CD4-positive, alpha-beta memory T cell (primary cell): ENCODE measurements at regions of chr19 and their contacts with region 1.

Region 1: GRCh38 chr19:19361075-19361594 is 40.5 kb downstream of the MAU2 start:
- DNase-seq: peak; percentile 57 to 77 (median 65)
- H3K4me3 ChIP-seq: peak overlapping the region in 1 of 2 donors; percentile 24
- H3K4me3 Mint-ChIP-seq: peak overlapping the region in 6 of 8 donors; percentile 34 to 66 (median 52)
- H3K27ac ChIP-seq: no peak overlapping the region
- H3K27ac Mint-ChIP-seq: peak overlapping the region; percentile 25 to 88 (median 82)
- H3K4me1 ChIP-seq: peaks cover 35% of the 10 kb centered on the region
- H3K4me1 Mint-ChIP-seq: peaks cover 24 to 47% (median 35%) of the 10 kb centered on the region in 4 donors
- H3K27me3 ChIP-seq: no peaks in the 10 kb centered on the region
- H3K27me3 Mint-ChIP-seq: no peaks in the 10 kb centered on the region

Region 2: GRCh38 chr19:18951665-18952281 is 409.4 kb before region 1 on chr19:
- CTCF ChIA-PET with region 1: no interaction called
- POLR2A ChIA-PET with region 1: no interaction called
- intact Hi-C with region 1: no loop called
- DNase-seq: no peak
- H3K4me3 ChIP-seq: no peak overlapping the region
- H3K4me3 Mint-ChIP-seq: no peak overlapping the region
- H3K27ac ChIP-seq: no peak overlapping the region
- H3K27ac Mint-ChIP-seq: no peak overlapping the region
- H3K4me1 ChIP-seq: no peaks in the 10 kb centered on the region
- H3K4me1 Mint-ChIP-seq: peaks cover 0 to 8% (median under 1%) of the 10 kb centered on the region in 4 donors
- H3K27me3 ChIP-seq: no peaks in the 10 kb centered on the region
- H3K27me3 Mint-ChIP-seq: peaks cover 0 to 6% of the 10 kb centered on the region in 2 donors

Region 3: GRCh38 chr19:19145684-19146608 is 215.2 kb before region 1 on chr19:
- CTCF ChIA-PET with region 1: interaction called, 3 read pairs
- POLR2A ChIA-PET with region 1: no interaction called
- intact Hi-C with region 1: loop called (anchors 5 kb)
- DNase-seq: peak; percentile 75 to 85 (median 79)
- H3K4me3 ChIP-seq: no peak overlapping the region
- H3K4me3 Mint-ChIP-seq: no peak overlapping the region
- H3K27ac ChIP-seq: no peak overlapping the region
- H3K27ac Mint-ChIP-seq: no peak overlapping the region
- H3K4me1 ChIP-seq: no peaks in the 10 kb centered on the region
- H3K4me1 Mint-ChIP-seq: no peaks in the 10 kb centered on the region
- H3K27me3 ChIP-seq: no peaks in the 10 kb centered on the region
- H3K27me3 Mint-ChIP-seq: no peaks in the 10 kb centered on the region

Region 4: GRCh38 chr19:19372656-19373416 is 11.7 kb after region 1 on chr19:
- CTCF ChIA-PET with region 1: interaction called, 30 read pairs
- POLR2A ChIA-PET with region 1: interaction called, 26 read pairs
- intact Hi-C with region 1: no loop called
- DNase-seq: peak; percentile 40 to 58 (median 52)
- H3K4me3 ChIP-seq: no peak overlapping the region
- H3K4me3 Mint-ChIP-seq: peak overlapping the region in 7 of 8 donors; percentile 50 to 73 (median 54)
- H3K27ac ChIP-seq: peak overlapping the region; percentile 63
- H3K27ac Mint-ChIP-seq: peak overlapping the region; percentile 79 to 95 (median 92)
- H3K4me1 ChIP-seq: peaks cover 18% of the 10 kb centered on the region
- H3K4me1 Mint-ChIP-seq: peaks cover 6 to 14% (median 9%) of the 10 kb centered on the region in 4 donors
- H3K27me3 ChIP-seq: no peaks in the 10 kb centered on the region
- H3K27me3 Mint-ChIP-seq: no peaks in the 10 kb centered on the region

Region 5: DNA sequence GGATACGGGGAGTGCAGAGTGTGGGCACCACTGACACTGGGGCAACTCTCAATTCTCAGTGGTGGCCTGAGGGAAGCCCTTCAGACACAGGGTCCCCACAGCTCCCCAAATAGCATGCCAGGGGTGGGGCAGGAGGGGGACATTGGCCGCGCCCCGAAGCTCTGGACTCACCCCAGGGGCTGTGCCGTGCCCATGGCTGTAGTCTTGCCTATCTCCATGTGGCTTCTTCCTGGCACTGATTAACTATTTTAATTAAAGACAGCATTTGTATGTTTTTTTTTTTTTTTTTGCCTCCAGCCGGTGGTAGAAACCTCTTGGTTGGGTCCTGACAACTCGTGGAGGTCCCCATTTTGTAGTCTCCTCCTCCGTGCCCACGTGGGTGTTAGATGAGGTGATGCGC is 67.6 kb after region 1 on chr19:
- CTCF ChIA-PET with region 1: no interaction called
- POLR2A ChIA-PET with region 1: no interaction called
- intact Hi-C with region 1: no loop called
- DNase-seq: no peak
- H3K4me3 ChIP-seq: no peak overlapping the region
- H3K4me3 Mint-ChIP-seq: no peak overlapping the region
- H3K27ac ChIP-seq: no peak overlapping the region
- H3K27ac Mint-ChIP-seq: peak overlapping the region in 3 of 7 donors; percentile 42 to 68 (median 67)
- H3K4me1 ChIP-seq: peaks cover 82% of the 10 kb centered on the region
- H3K4me1 Mint-ChIP-seq: peaks cover 48 to 100% (median 74%) of the 10 kb centered on the region in 4 donors
- H3K27me3 ChIP-seq: no peaks in the 10 kb centered on the region
- H3K27me3 Mint-ChIP-seq: no peaks in the 10 kb centered on the region

Region 6: DNA sequence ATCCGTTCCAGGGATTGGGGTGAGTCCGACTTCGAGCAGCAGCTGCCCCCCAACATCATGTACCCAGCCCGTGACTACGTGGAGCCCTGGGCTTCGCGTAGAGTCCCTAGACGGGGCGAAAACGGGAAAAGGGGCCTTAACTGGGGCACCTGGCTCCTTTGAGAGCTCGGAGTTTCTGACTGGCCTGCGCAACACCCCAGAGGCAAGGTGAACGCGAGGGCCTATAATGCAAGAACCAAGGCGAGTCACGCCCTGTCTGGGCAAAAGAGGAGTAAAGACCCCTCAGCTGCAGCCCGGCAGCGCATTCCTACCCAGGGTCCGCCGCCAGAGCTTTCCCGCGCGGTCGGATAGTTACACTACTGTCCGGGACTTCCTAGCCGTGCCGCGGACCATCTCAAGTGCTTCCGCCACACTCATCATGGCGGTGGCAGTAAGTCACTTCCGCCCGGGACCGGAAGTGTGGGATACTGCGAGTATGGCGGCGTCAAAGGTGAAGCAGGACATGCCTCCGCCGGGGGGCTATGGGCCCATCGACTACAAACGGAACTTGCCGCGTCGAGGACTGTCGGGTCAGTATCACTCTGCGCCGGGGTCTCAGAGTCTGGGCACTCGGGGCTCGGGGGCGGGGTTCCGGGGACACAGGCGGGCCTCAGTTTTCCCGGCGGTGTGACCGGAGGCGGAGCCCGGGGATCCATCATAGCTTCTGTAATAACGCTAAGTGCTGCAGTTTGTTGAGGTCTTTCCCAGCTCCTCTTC is 154.8 kb after region 1 on chr19 and contains the start of gene NDUFA13:
- CTCF ChIA-PET with region 1: no interaction called
- POLR2A ChIA-PET with region 1: interaction called, 12 read pairs
- intact Hi-C with region 1: no loop called
- DNase-seq: peak; percentile 91 to 95 (median 92)
- H3K4me3 ChIP-seq: peak within 1 kb of the TSS; percentile 88 to 90
- H3K4me3 Mint-ChIP-seq: peak within 1 kb of the TSS; percentile 93 to 99 (median 97)
- H3K27ac ChIP-seq: peak within 1 kb of the TSS; percentile 92
- H3K27ac Mint-ChIP-seq: peak within 1 kb of the TSS; percentile 94 to 98 (median 97)
- H3K4me1 ChIP-seq: peaks cover 35% of the 10 kb centered on the region
- H3K4me1 Mint-ChIP-seq: peaks cover 16 to 47% (median 29%) of the 10 kb centered on the region in 4 donors
- H3K27me3 ChIP-seq: no peaks in the 10 kb centered on the region
- H3K27me3 Mint-ChIP-seq: no peaks in the 10 kb centered on the region
- total RNA-seq, gene NDUFA13: 191 to 199 TPM